Gastrocnemius medialis (tissue), 4 donors: ENCODE measurements at regions of chr21 and their contacts with region 1.

Region 1: GRCh38 chr21:41777951-41778874 is 11.4 kb upstream of the RIPK4 start:
- DNase-seq: peak; percentile 60 to 73
- ATAC-seq: peak; percentile 84 to 92
- H3K4me3 ChIP-seq: no peak overlapping the region
- H3K27ac ChIP-seq: no peak overlapping the region
- H3K4me1 ChIP-seq: peaks cover 0 to 6% of the 10 kb centered on the region in 2 donors
- H3K27me3 ChIP-seq: peaks cover 19 to 43% (median 20%) of the 10 kb centered on the region in 3 donors
- CTCF ChIP-seq: peak; percentile 61 to 89 (median 79)
- POLR2A ChIP-seq: no peak

Region 2: DNA sequence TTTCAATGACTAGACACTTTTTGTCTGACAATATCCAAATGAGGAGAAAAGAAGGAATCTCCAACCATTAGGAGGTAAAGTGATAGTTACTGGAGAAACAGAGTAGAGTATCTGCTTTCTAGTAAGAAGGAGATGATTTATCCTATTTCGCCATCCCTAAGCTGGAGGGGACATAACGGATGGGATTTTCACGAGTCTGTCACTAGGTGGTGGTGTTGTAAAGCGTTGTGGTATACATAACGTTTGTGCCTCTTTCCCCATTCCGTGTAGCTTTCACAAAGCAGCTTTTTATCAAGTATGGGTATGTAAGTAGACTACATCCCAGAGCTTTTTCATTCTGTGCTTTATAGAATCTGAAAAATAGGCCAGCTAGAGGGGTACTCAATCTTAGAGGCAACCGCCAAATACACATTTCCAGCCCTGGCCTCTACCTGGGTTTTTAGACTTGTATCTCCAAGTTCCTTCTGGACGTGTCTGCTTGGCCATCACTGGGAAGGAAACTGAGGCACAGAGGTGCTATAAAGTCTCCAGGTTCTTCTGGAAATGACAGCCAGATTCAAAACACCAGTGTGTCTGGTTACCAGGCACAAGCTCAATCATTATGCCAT is 494.9 kb before region 1 on chr21:
- in situ Hi-C with region 1: no loop called
- intact Hi-C with region 1: loop called (anchors 5 kb)
- DNase-seq: peak in 1 of 2 donors; percentile 12
- ATAC-seq: peak; percentile 80 to 82
- H3K4me3 ChIP-seq: no peak overlapping the region
- H3K27ac ChIP-seq: no peak overlapping the region
- H3K4me1 ChIP-seq: peaks cover 0 to 1% of the 10 kb centered on the region in 2 donors
- H3K27me3 ChIP-seq: no peaks in the 10 kb centered on the region
- CTCF ChIP-seq: peak in 4 of 5 experiments; percentile 35 to 65 (median 57)
- POLR2A ChIP-seq: no peak

Region 3: DNA sequence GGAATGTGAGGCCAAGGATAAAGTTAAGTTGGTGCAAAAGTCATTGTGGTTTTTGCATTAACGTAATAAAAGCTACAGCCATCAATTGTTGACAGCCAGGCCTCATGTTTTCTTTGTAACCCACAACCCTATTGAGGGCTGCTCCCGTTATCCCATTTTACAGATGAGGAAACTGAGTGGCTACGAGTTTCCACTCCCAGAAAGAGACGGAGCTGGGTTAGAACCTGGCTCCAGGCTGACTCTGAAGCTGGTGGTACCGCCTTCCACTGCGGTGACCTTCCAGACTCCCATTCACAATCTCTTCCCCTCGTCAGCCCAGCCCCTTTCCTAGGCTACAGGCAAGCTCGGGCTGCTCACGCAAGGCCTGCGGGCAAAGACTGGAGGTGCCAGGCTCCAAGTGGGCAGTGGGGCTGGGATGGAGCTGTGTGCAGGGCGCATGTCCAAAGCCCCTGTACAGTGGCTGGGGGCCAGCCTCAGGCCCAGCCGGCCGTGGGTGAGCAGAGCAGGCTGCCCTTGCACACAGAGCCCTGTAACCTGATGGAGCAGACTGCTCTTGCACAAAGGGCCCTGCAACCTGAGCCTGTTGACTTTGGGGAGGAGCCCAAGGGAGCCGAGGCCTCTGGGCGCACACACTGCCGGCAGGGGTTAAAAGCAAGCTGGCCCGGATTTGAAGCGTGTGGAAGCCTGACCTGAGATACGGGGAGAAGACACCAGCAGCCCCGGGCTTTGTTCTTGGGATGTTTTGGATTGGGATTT is 172.9 kb before region 1 on chr21:
- in situ Hi-C with region 1: loop called (anchors 5 to 10 kb)
- intact Hi-C with region 1: no loop called
- DNase-seq: no peak
- ATAC-seq: no peak
- H3K4me3 ChIP-seq: no peak overlapping the region
- H3K27ac ChIP-seq: no peak overlapping the region
- H3K4me1 ChIP-seq: no peaks in the 10 kb centered on the region
- H3K27me3 ChIP-seq: peaks cover 0 to 10% (median 5%) of the 10 kb centered on the region in 3 donors
- CTCF ChIP-seq: no peak
- POLR2A ChIP-seq: no peak

Region 4: DNA sequence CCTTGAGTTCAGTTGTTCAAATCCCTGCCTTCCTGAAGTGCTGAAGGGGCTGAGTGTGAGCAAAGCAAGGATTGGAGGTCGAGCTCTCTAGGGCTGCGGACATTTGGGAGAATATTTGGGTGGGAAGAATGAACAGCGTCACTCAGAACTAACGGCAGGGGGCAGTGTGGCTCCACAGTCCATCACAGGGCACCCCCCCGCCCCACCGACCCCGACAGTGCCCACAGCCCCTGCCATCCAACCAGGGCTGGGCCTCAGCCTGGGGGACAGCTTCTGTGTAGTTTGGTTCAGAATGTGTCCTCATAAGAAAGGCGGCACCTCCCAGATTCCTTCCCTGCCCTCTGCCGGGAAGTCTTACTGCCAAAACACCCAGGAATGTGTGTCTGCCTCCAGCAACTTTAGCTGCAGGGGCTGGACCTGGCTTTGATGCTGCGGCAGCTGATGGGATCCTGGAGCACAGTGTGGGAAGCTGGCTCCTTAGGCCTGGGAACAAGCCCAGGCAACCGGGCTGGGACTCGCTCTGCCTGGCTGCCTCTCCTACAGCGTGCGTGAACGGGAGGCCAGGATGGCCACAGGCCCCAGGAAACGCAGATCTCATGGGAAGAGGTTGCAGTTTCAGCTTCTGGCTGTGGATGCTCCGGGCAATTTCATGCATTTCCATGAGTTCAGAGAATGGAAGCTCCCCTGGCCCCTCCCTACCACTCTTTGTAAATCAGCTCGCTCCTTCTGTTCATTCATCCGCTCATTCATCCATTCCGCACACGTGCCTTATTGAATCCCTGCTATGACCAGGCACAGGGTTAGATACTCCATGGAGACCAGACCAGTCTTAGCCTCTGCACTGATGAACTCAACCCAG is 165.3 kb before region 1 on chr21:
- in situ Hi-C with region 1: loop called (anchors 5 to 10 kb)
- intact Hi-C with region 1: loop called (anchors 1 kb)
- DNase-seq: peak; percentile 47 to 72
- ATAC-seq: peak; percentile 75 to 77
- H3K4me3 ChIP-seq: no peak overlapping the region
- H3K27ac ChIP-seq: peak overlapping the region in 1 of 4 donors; percentile 11
- H3K4me1 ChIP-seq: peaks cover 5 to 12% of the 10 kb centered on the region in 2 donors
- H3K27me3 ChIP-seq: peaks cover 0 to 8% (median 5%) of the 10 kb centered on the region in 3 donors
- CTCF ChIP-seq: peak; percentile 33 to 68 (median 54)
- POLR2A ChIP-seq: no peak

Region 5: GRCh38 chr21:41715649-41716281 is 62.4 kb before region 1 on chr21:
- in situ Hi-C with region 1: no loop called
- intact Hi-C with region 1: no loop called
- DNase-seq: no peak
- ATAC-seq: no peak
- H3K4me3 ChIP-seq: no peak overlapping the region
- H3K27ac ChIP-seq: no peak overlapping the region
- H3K4me1 ChIP-seq: no peaks in the 10 kb centered on the region
- H3K27me3 ChIP-seq: peaks cover 4 to 5% (median 4%) of the 10 kb centered on the region in 3 donors
- CTCF ChIP-seq: no peak
- POLR2A ChIP-seq: no peak